ENCODE measurements at regions of chr16 and their contacts with region 1.

Region 1: DNA sequence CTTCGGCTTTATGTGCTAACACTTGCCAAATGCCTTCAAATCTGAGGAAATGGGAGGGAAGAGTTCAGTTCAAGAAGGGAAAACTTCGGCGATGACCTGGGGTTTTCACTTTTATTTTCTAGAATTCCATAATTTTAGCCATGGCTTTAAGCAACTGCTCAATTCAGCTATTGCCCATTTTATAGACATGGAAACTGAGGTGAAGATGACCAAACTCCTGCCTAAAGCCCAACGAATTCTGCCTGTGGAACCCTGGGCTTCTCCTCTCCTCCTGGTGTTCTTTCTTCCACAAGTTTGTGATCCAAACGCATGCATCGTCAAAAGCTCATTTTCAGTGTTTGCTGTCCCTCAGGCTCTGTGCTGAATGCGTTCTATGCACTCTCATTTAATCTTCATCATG is 49.4 kb upstream of the NDRG4 start:
- DNase-seq: no peak
- H3K27ac ChIP-seq: no peak overlapping the region
- CTCF ChIP-seq: no peak

Region 2: DNA sequence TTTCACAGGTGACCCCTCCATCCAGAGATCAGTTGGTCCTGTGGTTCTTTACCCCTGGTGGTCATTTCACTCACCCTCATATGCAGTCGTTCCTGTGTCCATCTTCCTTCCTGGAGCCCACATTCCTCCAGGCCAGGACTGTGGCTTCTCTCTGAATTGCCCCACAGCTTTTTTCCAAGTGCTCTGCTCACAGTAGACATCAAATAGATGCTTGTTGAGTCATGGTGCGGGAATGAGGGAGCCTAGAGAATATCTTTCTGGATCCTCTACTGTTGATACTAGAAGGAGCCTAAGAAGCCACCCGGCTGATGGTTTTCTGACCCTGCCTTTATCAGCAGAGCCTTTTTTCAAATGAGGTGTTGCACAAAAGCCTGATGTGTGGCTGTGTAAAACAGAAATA is 438.9 kb before region 1 on chr16:
- CTCF ChIA-PET with region 1: no interaction called
- POLR2A ChIA-PET with region 1: interaction called, 10 read pairs
- DNase-seq: no peak
- H3K27ac ChIP-seq: no peak overlapping the region
- CTCF ChIP-seq: no peak

Region 3: DNA sequence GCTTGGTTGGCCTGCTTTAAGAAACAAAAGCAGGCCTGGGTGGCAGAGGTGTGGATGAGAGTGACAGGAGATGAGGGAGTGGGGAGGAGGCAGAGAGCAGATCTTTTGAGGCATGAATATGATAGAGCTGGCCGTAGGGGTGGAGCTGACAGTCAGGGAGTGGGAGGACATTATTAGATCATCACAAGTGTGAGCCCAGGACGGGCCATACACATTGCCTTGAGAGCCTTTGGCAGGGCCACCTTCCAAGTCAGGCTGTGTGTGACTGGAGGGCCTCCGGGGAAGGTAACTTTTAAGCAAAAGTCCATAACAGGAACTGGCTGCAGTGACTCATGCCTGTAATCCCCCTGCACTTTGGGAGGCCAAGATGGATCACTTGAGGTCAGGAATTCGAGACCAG is 32.0 kb before region 1 on chr16:
- CTCF ChIA-PET with region 1: no interaction called
- POLR2A ChIA-PET with region 1: no interaction called
- DNase-seq: no peak
- H3K27ac ChIP-seq: peak overlapping the region; percentile 18; the same call in 1 of the 2 replicates
- CTCF ChIP-seq: no peak